IMR-90 (cell line): ENCODE measurements at regions of chr6 and their contacts with region 1.

Region 1: DNA sequence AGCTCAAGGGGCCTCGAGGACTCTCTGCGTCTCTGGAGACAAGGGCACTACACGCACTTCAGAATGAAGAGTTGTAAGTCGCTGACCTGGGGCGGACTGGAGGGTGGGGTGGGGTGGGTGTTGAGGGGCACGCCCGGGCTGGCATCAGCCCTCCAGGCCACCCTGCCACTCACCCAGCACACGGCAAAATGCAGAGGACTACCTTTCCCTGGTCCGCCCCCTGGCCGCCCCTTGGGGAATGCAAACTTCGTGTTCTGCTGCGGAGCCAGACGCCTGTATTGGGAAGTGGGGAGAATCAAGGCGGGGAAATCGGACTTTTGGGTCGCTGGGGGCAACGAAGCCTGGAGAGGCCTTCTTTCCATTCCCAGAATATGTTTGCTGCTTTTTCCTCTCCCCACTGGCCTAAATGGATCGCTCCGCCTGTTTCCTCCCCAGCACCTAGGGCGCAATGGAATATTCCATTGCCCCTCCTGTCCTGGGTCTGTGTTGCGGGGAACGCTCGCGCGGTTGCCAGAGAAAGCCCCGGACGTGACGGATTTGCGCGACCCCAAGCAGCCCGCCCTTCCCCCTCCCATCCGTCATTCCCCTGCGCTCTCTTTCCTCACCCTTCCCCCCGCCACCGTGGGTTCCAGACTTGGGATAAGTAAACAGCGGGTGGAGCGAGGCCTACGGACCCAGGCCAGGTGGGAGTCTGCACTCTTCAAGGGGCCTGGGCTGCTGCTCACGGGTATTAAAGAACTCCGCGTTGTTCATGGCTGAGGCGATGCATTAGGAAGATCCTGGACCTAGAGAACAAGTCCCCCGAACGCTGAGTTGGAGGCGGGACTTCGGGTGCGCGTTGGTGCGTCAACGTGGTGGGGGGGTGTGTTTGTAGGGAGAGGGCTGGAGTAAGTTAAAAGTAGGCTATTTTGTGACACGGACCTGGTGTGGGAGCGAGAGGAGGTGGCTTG is at the start of gene PPT2:
- DNase-seq: peak; percentile 91
- ATAC-seq: peak; percentile 80
- H3K4me3 ChIP-seq: peak within 1 kb of the TSS; percentile 67
- H3K27ac ChIP-seq: peak within 1 kb of the TSS; percentile 84
- H3K4me1 ChIP-seq: peaks cover 23% of the 10 kb centered on the region
- H3K27me3 ChIP-seq: no peaks in the 10 kb centered on the region; the same call in 1 of the 2 replicates
- CTCF ChIP-seq: 0 out of 2 replicates have a peak, but pooled peaks have one; percentile 26
- POLR2A ChIP-seq: 0 out of 2 replicates have a peak, but pooled peaks have one; percentile 13
- RAD21 ChIP-seq: no peak
- total RNA-seq, gene PPT2: 2.2 and 3.2 TPM in 2 replicates

Region 2: DNA sequence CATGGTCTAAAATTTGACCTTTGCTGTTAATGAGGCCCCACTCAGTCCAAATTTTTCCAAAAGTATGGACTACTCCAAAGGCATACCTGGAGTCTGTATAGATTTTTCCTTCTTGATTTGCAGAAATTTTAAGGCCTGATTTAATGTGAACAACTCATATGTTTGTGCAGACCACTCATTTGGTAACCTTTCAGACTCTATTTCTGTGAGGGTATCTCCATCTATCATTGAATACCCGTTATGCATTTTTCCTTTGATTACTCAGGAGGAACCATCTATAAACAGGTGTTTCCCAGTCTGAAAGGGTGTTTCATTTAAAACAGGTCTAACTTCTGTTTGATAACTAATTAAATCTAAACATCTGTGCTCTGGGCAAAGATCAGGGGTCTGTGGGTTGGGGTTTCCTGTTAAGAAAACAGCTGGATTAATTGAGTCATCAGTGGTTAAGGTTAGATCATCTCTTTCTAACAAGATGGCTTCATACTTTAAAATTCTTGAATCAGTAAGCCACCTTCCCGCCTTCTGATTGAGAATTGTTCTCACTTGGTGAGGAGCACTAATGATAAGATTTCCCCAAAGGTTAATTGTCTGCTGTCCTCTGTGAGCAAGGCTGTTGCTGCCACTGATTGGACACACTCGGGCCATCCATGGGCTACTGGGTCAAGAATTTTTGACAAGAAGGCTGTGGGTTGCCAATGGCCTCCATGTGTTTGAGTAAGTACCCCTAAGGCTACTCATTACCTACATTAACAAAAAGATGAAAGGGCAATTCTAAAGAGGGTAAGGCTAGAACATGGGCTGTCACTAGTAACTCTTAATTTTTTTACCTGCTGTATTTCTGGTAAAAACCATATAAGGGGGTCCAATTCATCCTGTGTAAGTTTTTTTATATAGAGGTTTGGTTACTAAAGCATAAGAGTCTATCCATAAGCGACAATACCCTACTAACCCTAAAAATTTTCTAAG is 820.9 kb before region 1 on chr6:
- CTCF ChIA-PET with region 1: no interaction called
- POLR2A ChIA-PET with region 1: no interaction called
- dilution Hi-C with region 1: no loop called
- in situ Hi-C with region 1: no loop called
- intact Hi-C with region 1: no loop called
- DNase-seq: no peak
- ATAC-seq: no peak
- H3K4me3 ChIP-seq: no peak overlapping the region
- H3K27ac ChIP-seq: no peak overlapping the region
- H3K4me1 ChIP-seq: no peaks in the 10 kb centered on the region
- H3K27me3 ChIP-seq: no peaks in the 10 kb centered on the region; the same call in 1 of the 2 replicates
- CTCF ChIP-seq: no peak
- POLR2A ChIP-seq: no peak
- RAD21 ChIP-seq: no peak

Region 3: GRCh38 chr6:31901953-31902643 is 251.7 kb before region 1 on chr6 and contains the start of gene ZBTB12:
- CTCF ChIA-PET with region 1: no interaction called
- POLR2A ChIA-PET with region 1: no interaction called
- dilution Hi-C with region 1: no loop called
- in situ Hi-C with region 1: no loop called
- intact Hi-C with region 1: loop called (anchors 5 kb)
- DNase-seq: peak; percentile 98
- ATAC-seq: peak; percentile 78
- H3K4me3 ChIP-seq: peak within 1 kb of the TSS; percentile 58
- H3K27ac ChIP-seq: peak within 1 kb of the TSS; percentile 69
- H3K4me1 ChIP-seq: peaks cover 10% of the 10 kb centered on the region
- H3K27me3 ChIP-seq: no peaks in the 10 kb centered on the region
- CTCF ChIP-seq: peak; percentile 13; the same call in 1 of the 2 replicates
- POLR2A ChIP-seq: no peak
- RAD21 ChIP-seq: peak; percentile 71
- total RNA-seq, gene ZBTB12: 2.0 and 2.5 TPM in 2 replicates

Region 4: GRCh38 chr6:32047850-32048766 is 105.7 kb before region 1 on chr6:
- CTCF ChIA-PET with region 1: no interaction called
- POLR2A ChIA-PET with region 1: no interaction called
- dilution Hi-C with region 1: no loop called
- in situ Hi-C with region 1: no loop called
- intact Hi-C with region 1: loop called (anchors 10 kb)
- DNase-seq: peak; percentile 30
- ATAC-seq: peak; percentile 88
- H3K4me3 ChIP-seq: no peak overlapping the region
- H3K27ac ChIP-seq: no peak overlapping the region
- H3K4me1 ChIP-seq: peaks cover 16% of the 10 kb centered on the region; the same call in 1 of the 2 replicates
- H3K27me3 ChIP-seq: peaks cover 23% of the 10 kb centered on the region
- CTCF ChIP-seq: peak; percentile 74
- POLR2A ChIP-seq: no peak
- RAD21 ChIP-seq: peak; percentile 77

Region 5: GRCh38 chr6:32118782-32119628 is 34.8 kb before region 1 on chr6:
- CTCF ChIA-PET with region 1: interaction called, 3 read pairs
- POLR2A ChIA-PET with region 1: no interaction called
- dilution Hi-C with region 1: no loop called
- in situ Hi-C with region 1: loop called (anchors 5 kb)
- intact Hi-C with region 1: loop called (anchors 1 kb)
- DNase-seq: peak; percentile 85
- ATAC-seq: peak; percentile 78
- H3K4me3 ChIP-seq: no peak overlapping the region
- H3K27ac ChIP-seq: peak overlapping the region; percentile 36; the same call in 1 of the 2 replicates
- H3K4me1 ChIP-seq: peaks cover 11% of the 10 kb centered on the region
- H3K27me3 ChIP-seq: no peaks in the 10 kb centered on the region
- CTCF ChIP-seq: peak; percentile 98
- POLR2A ChIP-seq: peak; percentile 57; the same call in 1 of the 2 replicates
- RAD21 ChIP-seq: peak; percentile 98

Region 6: GRCh38 chr6:32195652-32195901 is 41.7 kb after region 1 on chr6:
- CTCF ChIA-PET with region 1: no interaction called
- POLR2A ChIA-PET with region 1: no interaction called
- dilution Hi-C with region 1: no loop called
- in situ Hi-C with region 1: no loop called
- intact Hi-C with region 1: loop called (anchors 1 kb)
- DNase-seq: peak; percentile 99
- ATAC-seq: peak; percentile 92
- H3K4me3 ChIP-seq: no peak overlapping the region
- H3K27ac ChIP-seq: no peak overlapping the region
- H3K4me1 ChIP-seq: peaks cover 15% of the 10 kb centered on the region
- H3K27me3 ChIP-seq: no peaks in the 10 kb centered on the region
- CTCF ChIP-seq: peak; percentile 49
- POLR2A ChIP-seq: no peak
- RAD21 ChIP-seq: no peak

Region 7: GRCh38 chr6:32369675-32370074 is 215.8 kb after region 1 on chr6:
- CTCF ChIA-PET with region 1: no interaction called
- POLR2A ChIA-PET with region 1: no interaction called
- dilution Hi-C with region 1: no loop called
- in situ Hi-C with region 1: no loop called
- intact Hi-C with region 1: no loop called
- DNase-seq: peak; percentile 86
- ATAC-seq: no peak
- H3K4me3 ChIP-seq: no peak overlapping the region
- H3K27ac ChIP-seq: no peak overlapping the region
- H3K4me1 ChIP-seq: peaks cover 2% of the 10 kb centered on the region; the same call in 1 of the 2 replicates
- H3K27me3 ChIP-seq: no peaks in the 10 kb centered on the region; the same call in 1 of the 2 replicates
- CTCF ChIP-seq: no peak
- POLR2A ChIP-seq: no peak
- RAD21 ChIP-seq: no peak